Heart right ventricle (tissue), 16 donors: ENCODE measurements at regions of chr15 and their contacts with region 1.

Region 1: DNA sequence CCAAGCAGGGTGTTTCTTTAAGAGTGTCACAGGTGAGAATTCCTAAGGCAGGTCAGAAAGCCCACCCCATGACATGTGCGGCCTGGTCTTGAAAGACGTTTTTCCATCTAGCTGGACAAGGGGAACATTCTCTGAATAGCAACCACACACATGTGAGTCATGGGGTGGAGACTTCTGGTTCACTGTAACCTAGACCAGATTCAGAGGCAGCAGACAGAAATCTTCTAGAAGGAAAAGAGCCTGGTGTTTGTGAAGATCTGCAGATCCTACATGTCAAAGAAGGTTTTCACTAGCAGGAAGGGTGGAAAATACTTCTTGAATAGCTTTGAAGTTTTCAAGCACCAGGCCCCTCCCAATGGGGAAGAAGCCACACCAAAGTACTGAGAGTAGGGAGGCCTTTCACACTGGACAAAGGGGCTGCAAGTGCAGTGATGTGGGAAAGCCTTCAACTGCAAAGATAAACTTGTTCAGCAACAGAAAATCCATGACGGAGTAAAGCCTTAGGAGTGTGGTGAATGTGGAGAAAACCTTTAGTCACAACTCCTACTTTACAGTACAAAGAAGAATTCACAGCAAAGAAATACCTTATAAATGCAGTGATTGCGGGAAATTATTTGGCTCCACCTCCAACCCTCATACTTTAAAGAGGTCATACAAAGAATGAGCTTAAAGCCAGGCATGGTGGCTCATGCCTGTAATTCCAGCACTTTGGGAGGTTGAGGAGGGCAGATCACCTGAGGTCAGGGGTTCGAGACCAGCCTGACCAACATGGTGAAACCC is 17.6 kb downstream of the ADAM10 start:
- DNase-seq: no peak
- ATAC-seq: peak in 6 of 8 donors; percentile 59 to 83 (median 70)
- H3K4me3 ChIP-seq: no peak overlapping the region
- H3K27ac ChIP-seq: peak overlapping the region in 4 of 10 donors; percentile 5 to 59 (median 30)
- H3K4me1 ChIP-seq: peaks cover 0 to 67% (median 54%) of the 10 kb centered on the region in 9 donors
- H3K27me3 ChIP-seq: no peaks in the 10 kb centered on the region
- CTCF ChIP-seq: no peak

Region 2: DNA sequence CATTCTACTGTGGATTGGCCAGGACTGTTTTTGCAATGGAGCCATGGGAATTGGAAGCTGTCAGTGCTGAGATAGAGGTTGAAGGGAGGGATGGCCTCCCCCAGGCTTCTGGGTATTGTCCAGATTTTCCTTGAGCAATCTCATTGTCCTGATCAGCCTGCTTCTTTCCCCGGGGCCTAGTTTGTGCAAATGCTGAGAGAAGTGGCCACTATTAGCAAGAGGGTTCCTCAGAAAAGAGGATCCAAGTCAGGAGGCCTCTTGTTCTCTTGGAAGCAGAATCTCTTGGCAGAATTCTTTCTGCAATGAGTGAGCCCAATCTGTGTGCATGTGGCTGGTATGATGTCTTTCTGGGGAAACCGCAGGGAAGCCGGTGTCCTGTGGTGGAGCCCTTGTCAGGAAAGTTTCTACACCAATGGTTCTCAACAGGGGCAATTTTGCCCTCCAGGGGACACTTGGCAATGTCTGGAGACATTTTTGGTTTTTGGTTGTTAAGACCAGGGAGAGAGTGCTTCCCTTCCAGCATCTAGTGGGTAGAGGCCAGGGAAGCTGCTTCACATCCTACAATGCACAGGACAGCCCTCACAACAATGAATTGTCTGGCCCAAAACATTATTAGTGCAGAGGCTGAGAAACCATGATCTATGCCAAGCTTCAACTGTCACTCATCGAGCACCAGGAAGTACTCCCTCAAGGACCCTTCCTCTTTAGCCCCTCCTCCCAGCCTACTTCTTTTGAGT is 298.2 kb before region 1 on chr15:
- intact Hi-C with region 1: no loop called
- DNase-seq: no peak
- ATAC-seq: peak in 1 of 8 donors; percentile 50
- H3K4me3 ChIP-seq: no peak overlapping the region
- H3K27ac ChIP-seq: no peak overlapping the region
- H3K4me1 ChIP-seq: peaks cover 0 to 22% (median 12%) of the 10 kb centered on the region in 9 donors
- H3K27me3 ChIP-seq: no peaks in the 10 kb centered on the region
- CTCF ChIP-seq: no peak

Region 3: GRCh38 chr15:58684036-58684710 is 47.8 kb before region 1 on chr15:
- intact Hi-C with region 1: loop called in 1 of 10 experiments (anchors 10 kb)
- DNase-seq: no peak
- ATAC-seq: no peak
- H3K4me3 ChIP-seq: no peak overlapping the region
- H3K27ac ChIP-seq: no peak overlapping the region
- H3K4me1 ChIP-seq: peaks cover 0 to 36% (median 13%) of the 10 kb centered on the region in 9 donors
- H3K27me3 ChIP-seq: no peaks in the 10 kb centered on the region
- CTCF ChIP-seq: no peak